Esophagus muscularis mucosa (tissue), 4 donors: ENCODE measurements at regions of chr3 and their contacts with region 1.

Region 1: GRCh38 chr3:124014366-124014942 is 22.5 kb upstream of the ROPN1 start:
- DNase-seq: no peak
- H3K4me3 ChIP-seq: no peak overlapping the region
- H3K27ac ChIP-seq: no peak overlapping the region
- H3K4me1 ChIP-seq: peaks cover 0 to 5% (median 0%) of the 10 kb centered on the region in 4 donors
- H3K27me3 ChIP-seq: no peaks in the 10 kb centered on the region
- CTCF ChIP-seq: no peak
- EP300 ChIP-seq: no peak
- POLR2A ChIP-seq: no peak

Region 2: DNA sequence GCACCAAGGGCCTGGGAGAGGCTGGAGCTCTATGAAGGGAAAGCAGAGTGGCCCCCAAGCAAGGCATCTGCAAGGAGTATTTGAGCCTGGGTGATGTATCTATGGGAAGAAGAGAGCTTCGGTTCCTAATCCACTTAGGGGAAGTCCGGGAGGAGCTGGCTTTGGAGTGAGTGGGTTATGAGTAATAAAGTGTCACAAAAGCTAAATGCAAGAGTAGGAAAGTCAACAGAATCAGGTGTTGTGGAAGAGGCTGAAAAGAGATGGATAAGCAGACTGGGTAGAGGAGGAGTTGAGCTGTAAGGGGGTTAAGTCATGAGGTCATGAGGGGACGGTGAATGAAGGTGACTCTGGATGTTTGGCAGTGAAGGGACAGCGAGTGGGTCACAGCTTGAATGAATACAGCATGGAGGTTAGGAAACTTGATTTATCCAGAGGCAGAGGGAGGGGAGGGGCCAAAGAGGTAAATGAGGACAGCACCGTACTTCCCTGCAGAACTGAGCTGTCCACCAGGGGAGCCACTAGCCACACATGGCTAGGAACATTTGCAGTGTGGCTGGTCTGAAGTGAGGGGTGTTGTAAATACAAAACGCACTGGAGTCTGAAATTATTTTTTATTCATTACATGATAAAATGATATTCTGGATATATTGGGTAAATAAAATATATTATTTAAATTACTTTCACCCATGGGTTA is 648.9 kb before region 1 on chr3:
- intact Hi-C with region 1: no loop called
- DNase-seq: no peak
- H3K4me3 ChIP-seq: no peak overlapping the region
- H3K27ac ChIP-seq: peak overlapping the region; percentile 3 to 97 (median 60)
- H3K4me1 ChIP-seq: peaks cover 53 to 98% (median 84%) of the 10 kb centered on the region in 4 donors
- H3K27me3 ChIP-seq: no peaks in the 10 kb centered on the region
- CTCF ChIP-seq: peak; percentile 28 to 59 (median 35)
- EP300 ChIP-seq: no peak
- POLR2A ChIP-seq: no peak

Region 3: DNA sequence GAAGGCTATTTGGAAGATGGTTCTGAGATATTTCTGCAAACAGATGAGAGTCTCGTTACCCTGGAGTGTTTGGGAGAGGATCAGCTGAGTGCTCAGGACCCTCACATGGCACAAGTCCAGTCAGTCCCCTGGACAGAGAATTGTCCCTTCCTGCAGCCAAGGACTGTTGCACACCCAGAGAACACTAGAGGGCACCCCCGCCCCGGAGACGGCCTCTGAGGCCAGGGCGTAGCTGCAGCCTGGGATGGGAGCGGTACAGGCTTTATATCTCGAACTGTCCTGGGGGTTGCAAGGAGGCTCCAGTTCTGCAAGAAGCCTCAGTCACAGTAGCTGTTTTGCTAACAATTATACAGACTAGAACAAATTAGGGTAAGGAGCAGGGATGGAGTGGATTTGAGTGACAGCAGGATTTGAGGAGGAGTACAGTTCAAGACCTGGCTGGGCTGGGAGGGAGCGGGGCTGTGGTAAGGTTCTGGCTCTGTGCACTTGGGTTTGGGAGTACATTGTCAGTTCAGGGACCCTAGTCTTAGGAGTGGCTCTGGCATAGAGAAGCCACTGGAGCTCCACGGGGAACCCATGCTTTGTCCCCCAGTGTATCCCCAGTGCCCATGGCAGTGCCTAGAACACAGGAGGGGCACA is 362.0 kb before region 1 on chr3:
- intact Hi-C with region 1: no loop called
- DNase-seq: peak; percentile 95
- H3K4me3 ChIP-seq: no peak overlapping the region
- H3K27ac ChIP-seq: peak overlapping the region; percentile 94 to 97 (median 96)
- H3K4me1 ChIP-seq: peaks cover 45 to 96% (median 95%) of the 10 kb centered on the region in 4 donors
- H3K27me3 ChIP-seq: no peaks in the 10 kb centered on the region
- CTCF ChIP-seq: peak; percentile 75 to 91 (median 80)
- EP300 ChIP-seq: no peak
- POLR2A ChIP-seq: no peak

Region 4: GRCh38 chr3:124078953-124079911 is 64.8 kb after region 1 on chr3:
- intact Hi-C with region 1: loop called (anchors 1 kb)
- DNase-seq: no peak
- H3K4me3 ChIP-seq: no peak overlapping the region
- H3K27ac ChIP-seq: no peak overlapping the region
- H3K4me1 ChIP-seq: peaks cover 15 to 26% (median 22%) of the 10 kb centered on the region in 4 donors
- H3K27me3 ChIP-seq: no peaks in the 10 kb centered on the region
- CTCF ChIP-seq: peak; percentile 73 to 88 (median 77)
- EP300 ChIP-seq: no peak
- POLR2A ChIP-seq: no peak

Region 5: DNA sequence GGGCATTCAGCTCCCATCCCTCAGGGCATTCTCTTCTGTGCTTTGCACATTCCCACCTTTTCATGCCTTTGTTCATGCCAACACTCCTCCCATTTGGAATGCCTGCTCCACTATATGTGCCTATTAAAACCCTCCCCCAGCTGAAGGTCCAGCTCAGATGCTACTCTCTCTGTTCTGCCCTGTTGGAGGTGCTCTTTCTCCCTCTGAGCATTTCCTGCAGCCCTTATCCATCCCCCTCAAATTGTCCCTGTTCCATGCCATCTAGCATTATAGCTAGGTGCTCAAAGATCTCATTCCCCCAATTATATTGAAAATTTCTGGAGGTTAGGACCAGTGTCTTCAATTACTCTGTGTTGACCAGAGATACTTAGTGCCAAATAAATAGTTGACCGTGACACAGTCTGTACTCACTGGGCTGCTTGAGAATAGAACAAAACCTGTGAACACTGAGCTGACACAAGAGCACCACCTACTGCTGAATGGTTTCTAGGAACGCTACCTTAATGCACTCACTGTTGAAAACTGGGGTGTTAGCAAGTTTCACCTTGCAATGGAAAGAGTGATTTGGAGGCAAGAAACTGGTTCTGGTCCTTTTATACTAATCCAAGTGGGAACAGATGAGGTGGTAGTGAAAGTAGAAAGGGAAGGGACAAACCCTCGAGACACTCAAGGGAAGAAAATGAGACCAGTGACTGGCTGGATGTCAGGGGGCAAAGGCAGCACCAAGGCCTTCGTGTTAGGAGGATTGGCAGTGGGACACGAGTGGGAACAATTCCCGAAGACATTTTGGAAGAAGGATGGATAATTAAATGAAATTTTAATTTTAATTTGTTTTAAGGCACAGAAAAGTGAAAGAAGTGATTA is 267.2 kb after region 1 on chr3:
- intact Hi-C with region 1: loop called (anchors 5 kb)
- DNase-seq: peak; percentile 79
- H3K4me3 ChIP-seq: no peak overlapping the region
- H3K27ac ChIP-seq: peak overlapping the region; percentile 82 to 90 (median 85)
- H3K4me1 ChIP-seq: peaks cover 50 to 74% (median 63%) of the 10 kb centered on the region in 4 donors
- H3K27me3 ChIP-seq: no peaks in the 10 kb centered on the region
- CTCF ChIP-seq: peak; percentile 54 to 69 (median 68)
- EP300 ChIP-seq: no peak
- POLR2A ChIP-seq: no peak

Region 6: GRCh38 chr3:124467980-124468902 is 453.8 kb after region 1 on chr3:
- intact Hi-C with region 1: loop called (anchors 5 kb)
- DNase-seq: no peak
- H3K4me3 ChIP-seq: no peak overlapping the region
- H3K27ac ChIP-seq: no peak overlapping the region
- H3K4me1 ChIP-seq: peaks cover 0 to 7% (median 0%) of the 10 kb centered on the region in 4 donors
- H3K27me3 ChIP-seq: no peaks in the 10 kb centered on the region
- CTCF ChIP-seq: peak; percentile 94 to 96 (median 95)
- EP300 ChIP-seq: no peak
- POLR2A ChIP-seq: no peak

Region 7: DNA sequence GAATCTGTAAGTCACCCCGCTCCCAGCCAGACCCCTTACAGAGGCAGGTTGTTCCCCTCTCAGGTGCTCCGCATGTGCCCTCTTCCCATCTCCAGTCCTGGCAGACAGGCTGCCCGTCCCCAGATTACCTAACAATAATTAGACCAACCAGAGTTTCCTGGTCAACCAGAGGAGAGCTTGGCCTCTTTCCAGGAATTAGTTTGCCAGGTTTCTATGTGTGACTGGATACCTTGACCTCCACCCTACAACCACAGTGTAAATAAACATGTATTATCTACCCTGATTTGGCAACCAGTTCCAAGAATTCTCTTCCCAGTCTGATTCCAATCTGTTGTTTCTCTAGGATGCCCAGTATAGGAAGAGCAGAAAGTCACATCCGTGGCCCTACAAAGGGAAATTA is 537.8 kb after region 1 on chr3:
- intact Hi-C with region 1: loop called (anchors 5 kb)
- DNase-seq: no peak
- H3K4me3 ChIP-seq: no peak overlapping the region
- H3K27ac ChIP-seq: no peak overlapping the region
- H3K4me1 ChIP-seq: peaks cover 15 to 48% (median 38%) of the 10 kb centered on the region in 4 donors
- H3K27me3 ChIP-seq: no peaks in the 10 kb centered on the region
- CTCF ChIP-seq: no peak
- EP300 ChIP-seq: no peak
- POLR2A ChIP-seq: no peak